Heart right ventricle (tissue), 16 donors: ENCODE measurements at regions of chr9 and their contacts with region 1.

Region 1: DNA sequence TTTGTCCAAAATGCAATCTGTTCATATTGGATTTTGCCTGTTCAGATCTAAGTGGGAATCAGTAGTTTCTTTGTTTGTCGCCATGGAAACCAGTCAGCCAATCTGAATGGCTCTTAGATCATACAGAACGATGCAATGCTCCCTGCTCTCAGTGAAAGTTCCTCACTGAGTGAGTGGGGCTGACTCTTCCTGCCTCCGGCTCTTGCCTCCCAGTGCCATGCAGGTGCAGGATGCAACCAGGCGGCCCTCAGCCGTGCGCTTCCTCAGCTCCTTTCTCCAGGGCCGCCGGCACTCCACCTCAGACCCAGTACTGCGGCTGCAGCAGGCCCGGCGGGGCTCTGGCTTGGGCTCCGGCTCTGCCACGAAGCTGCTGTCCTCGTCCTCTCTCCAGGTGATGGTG is at the start of gene PTPDC1:
- DNase-seq: peak; percentile 11 to 54
- ATAC-seq: peak in 6 of 8 donors; percentile 43 to 58 (median 52)
- H3K4me3 ChIP-seq: peak within 1 kb of the TSS in 3 of 10 donors; percentile 4 to 40 (median 33)
- H3K27ac ChIP-seq: peak within 1 kb of the TSS in 5 of 10 donors; percentile 11 to 73 (median 56)
- H3K4me1 ChIP-seq: peaks cover 0 to 62% (median 32%) of the 10 kb centered on the region in 9 donors
- H3K27me3 ChIP-seq: no peaks in the 10 kb centered on the region
- CTCF ChIP-seq: no peak
- total RNA-seq, gene PTPDC1: 6.3 to 14.7 (median 9.5) TPM

Region 2: GRCh38 chr9:94166237-94166963 is 82.1 kb after region 1 on chr9:
- intact Hi-C with region 1: loop called in 2 of 10 experiments (anchors 5 to 10 kb)
- DNase-seq: peak; percentile 96 to 99
- ATAC-seq: peak; percentile 80 to 92 (median 87)
- H3K4me3 ChIP-seq: peak overlapping the region; percentile 54 to 92 (median 75)
- H3K27ac ChIP-seq: peak overlapping the region; percentile 99 to 100 (median 100)
- H3K4me1 ChIP-seq: peaks cover 5 to 48% (median 38%) of the 10 kb centered on the region in 9 donors
- H3K27me3 ChIP-seq: no peaks in the 10 kb centered on the region
- CTCF ChIP-seq: peak in 5 of 9 donors; percentile 6 to 38 (median 29)

Region 3: DNA sequence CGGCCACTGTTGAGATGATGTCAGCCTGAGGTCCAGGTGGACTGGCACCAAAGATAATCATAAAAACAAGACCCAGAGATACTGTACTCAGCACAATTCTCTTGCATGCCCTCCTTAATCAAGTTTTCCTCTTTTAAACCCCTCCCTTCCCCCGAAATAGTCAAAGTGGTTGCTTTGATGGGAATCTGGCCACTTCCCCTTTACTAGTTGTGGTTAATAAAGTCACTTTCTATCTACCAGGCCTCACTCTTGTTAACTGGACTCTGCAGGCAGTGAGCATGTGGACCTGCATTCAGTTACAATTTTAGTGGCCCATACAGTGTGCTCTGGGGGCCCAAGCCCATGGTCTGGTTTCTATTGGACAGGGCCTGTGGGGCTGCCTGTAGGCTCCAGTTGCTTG is 491.8 kb after region 1 on chr9:
- intact Hi-C with region 1: no loop called
- DNase-seq: no peak
- ATAC-seq: no peak
- H3K4me3 ChIP-seq: no peak overlapping the region
- H3K27ac ChIP-seq: no peak overlapping the region
- H3K4me1 ChIP-seq: no peaks in the 10 kb centered on the region
- H3K27me3 ChIP-seq: no peaks in the 10 kb centered on the region
- CTCF ChIP-seq: no peak